Stomach (tissue), 19 donors: ENCODE measurements at regions of chr4 and their contacts with region 1.

Region 1: GRCh38 chr4:99054428-99054994 is 34.1 kb downstream of the ADH5 start:
- DNase-seq: no peak
- H3K4me3 ChIP-seq: no peak overlapping the region
- H3K27ac ChIP-seq: no peak overlapping the region
- H3K4me1 ChIP-seq: peaks cover 0 to 12% (median 5%) of the 10 kb centered on the region in 4 donors
- H3K27me3 ChIP-seq: no peaks in the 10 kb centered on the region
- CTCF ChIP-seq: no peak
- EP300 ChIP-seq: no peak
- POLR2A ChIP-seq: no peak

Region 2: GRCh38 chr4:98995183-98996055 is 59.1 kb before region 1 on chr4 and contains the start of gene METAP1:
- intact Hi-C with region 1: loop called (anchors 10 kb)
- DNase-seq: peak; percentile 94 to 98
- H3K4me3 ChIP-seq: peak within 1 kb of the TSS; percentile 89 to 99 (median 98)
- H3K27ac ChIP-seq: peak within 1 kb of the TSS; percentile 87 to 96 (median 89)
- H3K4me1 ChIP-seq: peaks cover 0 to 34% (median 19%) of the 10 kb centered on the region in 4 donors
- H3K27me3 ChIP-seq: no peaks in the 10 kb centered on the region
- CTCF ChIP-seq: peak in 5 of 7 experiments; percentile 24 to 54 (median 44)
- EP300 ChIP-seq: no peak
- POLR2A ChIP-seq: peak in 1 of 4 donors; percentile 33
- total RNA-seq, gene METAP1: 1.8 to 64.3 (median 33.2) TPM

Region 3: DNA sequence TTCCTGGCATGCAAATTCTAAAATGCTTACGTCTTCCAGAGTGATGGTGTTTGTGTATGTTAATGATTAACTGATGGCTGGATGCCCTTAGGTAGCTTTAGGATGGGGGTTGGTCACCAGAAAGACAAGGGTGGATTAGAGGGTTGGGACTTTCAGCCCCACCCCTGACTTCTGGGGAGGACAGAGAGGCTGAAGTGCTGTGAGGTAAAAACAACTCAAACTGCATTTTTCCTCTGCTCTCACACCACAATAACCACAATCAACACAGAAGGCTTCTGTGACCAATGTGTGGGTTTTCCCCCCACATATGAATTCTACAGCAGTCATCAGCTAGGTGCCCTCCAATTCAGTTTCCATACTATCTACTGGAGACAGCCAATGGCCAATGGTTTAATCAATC is 1154.5 kb after region 1 on chr4:
- intact Hi-C with region 1: no loop called
- DNase-seq: no peak
- H3K4me3 ChIP-seq: no peak overlapping the region
- H3K27ac ChIP-seq: no peak overlapping the region
- H3K4me1 ChIP-seq: no peaks in the 10 kb centered on the region
- H3K27me3 ChIP-seq: no peaks in the 10 kb centered on the region
- CTCF ChIP-seq: no peak
- EP300 ChIP-seq: no peak
- POLR2A ChIP-seq: no peak